ENCODE measurements at regions of chr10 and their contacts with region 1.

Region 1: DNA sequence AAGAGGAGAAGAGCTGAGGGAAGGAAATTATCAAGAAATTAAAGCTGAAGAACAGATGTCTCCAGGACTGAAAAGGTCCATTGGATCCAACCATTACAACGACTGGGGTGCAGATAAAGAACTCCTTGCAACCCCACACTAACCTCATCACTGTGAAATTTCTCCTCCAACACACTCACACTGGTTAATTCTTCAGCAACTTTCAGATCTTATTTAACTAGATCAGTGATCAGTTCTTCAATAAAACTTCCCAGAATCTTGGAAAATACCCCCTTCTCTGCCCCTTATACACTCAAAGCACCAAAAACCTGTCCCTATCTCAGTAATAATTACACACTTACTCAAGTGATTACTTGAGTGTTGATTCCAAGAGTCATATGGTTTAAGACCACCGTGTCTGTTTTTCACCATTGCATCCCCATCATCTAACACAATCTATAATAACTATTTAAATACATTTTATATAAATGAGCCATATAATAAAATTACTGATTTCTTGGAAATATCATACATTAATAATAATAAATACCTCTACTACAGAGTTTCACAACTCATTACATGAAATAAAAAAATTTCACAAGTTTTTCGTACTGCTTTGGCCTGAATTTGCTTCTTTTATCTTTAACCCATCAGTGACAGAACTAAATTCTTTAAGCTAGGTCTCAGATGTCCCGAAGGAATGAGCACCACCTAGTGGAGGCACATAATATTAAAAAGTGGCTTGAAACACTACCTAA is 123.7 kb downstream of the MPP7 start:
- DNase-seq: no peak
- ATAC-seq: peak; percentile 83
- H3K4me3 ChIP-seq: no peak overlapping the region
- H3K27ac ChIP-seq: no peak overlapping the region
- H3K4me1 ChIP-seq: no peaks in the 10 kb centered on the region
- H3K27me3 ChIP-seq: no peaks in the 10 kb centered on the region
- CTCF ChIP-seq: peak; percentile 55 to 64 (median 58)
- EP300 ChIP-seq: no peak
- POLR2A ChIP-seq: no peak
- RAD21 ChIP-seq: peak; percentile 75

Region 2: DNA sequence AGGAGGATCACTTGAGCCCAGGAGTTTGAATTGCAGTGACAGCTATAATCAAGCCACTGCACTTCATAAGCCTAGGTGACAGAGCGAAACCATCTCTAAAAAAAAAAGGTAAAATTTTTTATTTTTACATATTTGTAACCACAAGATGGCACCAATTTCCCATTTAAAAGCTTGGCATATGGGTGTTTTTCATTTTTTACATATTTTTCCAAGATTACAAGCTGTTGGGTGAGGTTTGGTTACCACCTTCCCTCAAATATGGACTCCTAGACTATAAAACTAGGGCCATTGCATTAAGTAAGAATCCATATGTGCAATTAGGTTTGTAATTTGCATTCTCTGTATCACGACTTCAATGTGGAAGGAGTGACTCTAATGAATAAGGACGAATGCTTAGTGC is 809.3 kb before region 1 on chr10:
- CTCF ChIA-PET with region 1: interaction called, 7 read pairs
- POLR2A ChIA-PET with region 1: no interaction called
- RAD21 ChIA-PET with region 1: interaction called, 3 read pairs
- SMC1A ChIA-PET with region 1: no interaction called
- in situ Hi-C with region 1: no loop called
- intact Hi-C with region 1: loop called (anchors 5 kb)
- DNase-seq: no peak
- ATAC-seq: peak; percentile 27; the same call in 2 of the 3 replicates
- H3K4me3 ChIP-seq: no peak overlapping the region
- H3K27ac ChIP-seq: no peak overlapping the region
- H3K4me1 ChIP-seq: 0 out of 2 replicates have a peak, but pooled peaks cover 6% of the 10 kb centered on the region
- H3K27me3 ChIP-seq: 0 out of 4 replicates have a peak, but pooled peaks cover 0 to 1% of the 10 kb centered on the region in 2 experiments
- CTCF ChIP-seq: no peak; a peak in 1 of 6 replicates
- EP300 ChIP-seq: no peak
- POLR2A ChIP-seq: no peak
- RAD21 ChIP-seq: peak; percentile 20; the same call in 1 of the 2 replicates

Region 3: GRCh38 chr10:27446091-27446918 is 732.9 kb before region 1 on chr10:
- CTCF ChIA-PET with region 1: interaction called, 3 read pairs
- POLR2A ChIA-PET with region 1: no interaction called
- RAD21 ChIA-PET with region 1: interaction called, 4 read pairs
- SMC1A ChIA-PET with region 1: no interaction called
- in situ Hi-C with region 1: loop called (anchors 25 kb)
- intact Hi-C with region 1: loop called (anchors 2 kb)
- DNase-seq: no peak
- ATAC-seq: peak; percentile 45; the same call in 1 of the 3 replicates
- H3K4me3 ChIP-seq: no peak overlapping the region
- H3K27ac ChIP-seq: no peak overlapping the region
- H3K4me1 ChIP-seq: no peaks in the 10 kb centered on the region
- H3K27me3 ChIP-seq: no peaks in the 10 kb centered on the region
- CTCF ChIP-seq: peak; percentile 17 to 33 (median 26); a peak in 3 of 6 replicates
- EP300 ChIP-seq: no peak
- POLR2A ChIP-seq: no peak
- RAD21 ChIP-seq: peak; percentile 34; the same call in 1 of the 2 replicates

Region 4: GRCh38 chr10:27558612-27559020 is 620.6 kb before region 1 on chr10:
- CTCF ChIA-PET with region 1: interaction called, 7 read pairs
- POLR2A ChIA-PET with region 1: no interaction called
- RAD21 ChIA-PET with region 1: interaction called, 4 read pairs
- SMC1A ChIA-PET with region 1: no interaction called
- in situ Hi-C with region 1: loop called (anchors 5 kb)
- intact Hi-C with region 1: loop called (anchors 5 kb)
- DNase-seq: no peak
- ATAC-seq: peak; percentile 87
- H3K4me3 ChIP-seq: no peak overlapping the region
- H3K27ac ChIP-seq: no peak overlapping the region
- H3K4me1 ChIP-seq: no peaks in the 10 kb centered on the region
- H3K27me3 ChIP-seq: no peaks in the 10 kb centered on the region
- CTCF ChIP-seq: peak; percentile 53 to 70 (median 57); a peak in 5 of 6 replicates
- EP300 ChIP-seq: no peak
- POLR2A ChIP-seq: no peak
- RAD21 ChIP-seq: peak; percentile 81

Region 5: GRCh38 chr10:27742195-27743011 is 436.8 kb before region 1 on chr10:
- CTCF ChIA-PET with region 1: interaction called, 3 read pairs
- POLR2A ChIA-PET with region 1: no interaction called
- RAD21 ChIA-PET with region 1: no interaction called
- SMC1A ChIA-PET with region 1: no interaction called
- in situ Hi-C with region 1: no loop called
- intact Hi-C with region 1: loop called (anchors 2 kb)
- DNase-seq: peak; percentile 38
- ATAC-seq: peak; percentile 99
- H3K4me3 ChIP-seq: no peak overlapping the region
- H3K27ac ChIP-seq: no peak overlapping the region
- H3K4me1 ChIP-seq: no peaks in the 10 kb centered on the region
- H3K27me3 ChIP-seq: peaks cover 12 to 50% of the 10 kb centered on the region in 2 experiments
- CTCF ChIP-seq: peak; percentile 58 to 69 (median 67); a peak in 5 of 6 replicates
- EP300 ChIP-seq: no peak; a peak in 1 of 4 replicates
- POLR2A ChIP-seq: no peak; the same call in 1 of the 2 replicates
- RAD21 ChIP-seq: peak; percentile 59